Body of pancreas (tissue), 4 donors: ENCODE measurements at regions of chr12 and their contacts with region 1.

Region 1: DNA sequence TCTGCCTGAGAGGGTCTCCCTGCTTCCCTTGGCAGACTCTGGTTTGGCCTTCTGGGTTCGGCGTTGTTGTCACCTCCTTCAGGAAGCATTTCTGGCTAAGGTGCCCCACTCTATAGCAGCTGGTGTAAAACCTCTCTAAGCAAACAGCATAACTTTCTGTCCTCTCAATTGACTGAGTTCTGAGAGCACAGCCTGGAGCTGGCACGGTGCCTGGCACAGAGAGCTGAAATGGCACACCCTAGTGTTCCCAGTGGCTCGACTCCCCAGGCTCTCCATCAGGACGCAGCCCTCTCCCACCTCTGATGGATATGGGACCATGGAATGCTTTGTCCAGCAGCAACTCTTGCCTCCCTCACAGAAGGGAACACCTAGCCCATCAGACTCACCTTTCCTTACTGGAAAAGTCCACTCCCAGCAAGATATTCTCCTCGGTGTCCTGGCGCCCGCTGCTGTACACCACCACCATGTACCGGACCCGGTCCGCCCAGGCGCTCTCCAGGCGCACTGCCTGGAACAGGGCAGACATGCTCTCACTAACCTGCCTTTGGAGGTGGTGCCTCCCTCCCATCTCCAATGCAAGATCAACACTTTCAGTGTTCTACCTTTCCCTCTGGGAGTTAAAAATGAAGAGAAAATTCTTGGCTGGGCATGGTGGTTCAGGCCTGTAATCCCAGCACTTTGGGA is 40.6 kb downstream of the SSH1 start:
- DNase-seq: peak in 1 of 4 donors; percentile 31
- ATAC-seq: no peak
- H3K4me3 ChIP-seq: no peak overlapping the region
- H3K27ac ChIP-seq: no peak overlapping the region
- H3K4me1 ChIP-seq: no peaks in the 10 kb centered on the region
- H3K27me3 ChIP-seq: no peaks in the 10 kb centered on the region
- CTCF ChIP-seq: no peak
- POLR2A ChIP-seq: no peak

Region 2: DNA sequence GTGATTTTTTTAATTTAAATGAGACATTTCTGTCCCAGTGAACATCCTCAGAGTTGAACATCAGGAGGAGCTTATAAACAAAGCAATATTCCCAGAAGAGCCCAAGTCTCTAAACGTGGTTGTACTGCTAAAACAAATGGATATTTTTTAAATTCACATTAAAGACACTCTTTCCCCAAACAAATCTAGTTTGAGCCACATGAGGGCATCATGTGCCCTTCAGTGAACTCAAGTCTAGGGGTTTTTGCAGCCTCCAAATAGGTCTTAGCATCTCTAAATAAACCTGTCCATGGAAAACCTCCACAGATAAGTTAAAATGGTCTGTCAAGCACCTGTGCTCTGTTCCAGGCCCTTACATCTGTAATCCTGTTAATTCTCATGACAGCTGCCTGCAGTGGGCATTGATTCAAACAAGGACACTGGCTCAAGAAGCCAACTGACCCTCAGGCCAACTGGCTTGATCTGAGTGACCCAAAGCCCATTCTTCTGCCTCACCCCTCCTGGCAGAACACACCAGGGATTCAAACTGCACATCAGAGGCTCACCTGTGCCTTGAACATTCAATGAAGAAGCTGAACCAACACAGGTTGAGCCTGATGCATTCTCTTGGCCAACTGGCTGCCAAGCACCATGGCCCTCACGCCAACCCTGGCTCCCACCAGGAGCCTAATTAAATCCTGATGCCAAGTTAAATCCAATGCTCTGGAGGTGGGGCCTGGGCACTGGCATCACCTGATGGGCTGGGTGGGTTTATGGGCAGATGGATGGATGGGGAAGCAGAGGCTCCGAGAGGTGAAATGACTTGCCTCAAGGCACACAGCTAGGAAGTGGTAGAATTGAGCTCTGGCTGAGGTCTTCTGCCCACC is 245.8 kb before region 1 on chr12:
- intact Hi-C with region 1: loop called (anchors 10 kb)
- DNase-seq: no peak
- ATAC-seq: no peak
- H3K4me3 ChIP-seq: no peak overlapping the region
- H3K27ac ChIP-seq: peak overlapping the region in 1 of 4 donors; percentile 11
- H3K4me1 ChIP-seq: peaks cover 21% of the 10 kb centered on the region
- H3K27me3 ChIP-seq: no peaks in the 10 kb centered on the region
- CTCF ChIP-seq: peak in 1 of 7 experiments; percentile 4
- POLR2A ChIP-seq: no peak

Region 3: DNA sequence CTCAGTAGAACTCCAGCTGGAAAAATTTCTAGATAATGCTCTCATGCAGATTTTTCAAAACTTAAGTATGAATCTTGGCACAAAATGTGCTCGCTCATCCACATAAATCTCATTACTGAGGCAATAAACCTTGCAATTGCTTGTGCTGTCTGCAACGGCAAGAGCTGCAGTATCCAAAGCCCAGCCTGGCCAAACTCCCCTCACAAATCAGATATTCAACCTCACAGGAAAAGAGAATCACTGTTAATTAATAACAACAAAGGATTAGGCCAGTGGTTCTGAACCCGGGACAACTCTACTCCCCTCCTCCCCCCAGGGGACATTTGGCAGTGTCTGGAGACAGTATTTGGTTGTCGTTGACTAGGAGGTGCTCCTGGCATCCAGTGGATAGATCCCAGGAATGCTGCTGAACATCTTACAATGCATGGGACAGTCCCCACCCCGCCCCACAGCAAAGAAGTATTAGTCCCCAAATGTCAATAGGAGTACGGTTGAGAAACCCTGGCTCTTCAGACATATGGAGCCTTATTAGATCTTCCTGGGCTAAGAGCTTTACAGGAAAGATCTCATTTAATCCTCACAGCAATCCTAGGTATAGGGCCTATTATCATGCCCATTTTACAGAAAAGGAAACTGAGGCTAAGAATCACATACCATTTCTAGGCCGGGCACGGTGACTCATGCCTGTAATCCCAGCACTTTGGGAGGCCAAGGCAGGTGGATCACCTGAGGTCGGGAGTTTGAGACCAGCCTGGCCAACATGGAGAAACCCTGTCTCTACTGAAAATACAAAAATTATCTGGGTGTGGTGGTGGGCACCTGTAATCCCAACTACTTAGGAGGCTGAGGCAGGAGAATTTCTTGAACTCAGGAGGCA is 66.0 kb before region 1 on chr12:
- intact Hi-C with region 1: no loop called
- DNase-seq: no peak
- ATAC-seq: no peak
- H3K4me3 ChIP-seq: no peak overlapping the region
- H3K27ac ChIP-seq: no peak overlapping the region
- H3K4me1 ChIP-seq: no peaks in the 10 kb centered on the region
- H3K27me3 ChIP-seq: no peaks in the 10 kb centered on the region
- CTCF ChIP-seq: no peak
- POLR2A ChIP-seq: no peak